Left colon (tissue), 2 donors: ENCODE measurements at regions of chr5 and their contacts with region 1.

Region 1: GRCh38 chr5:6745706-6746222 is 32.5 kb downstream of the TENT4A start:
- DNase-seq: no peak
- ATAC-seq: peak; percentile 93

Region 2: DNA sequence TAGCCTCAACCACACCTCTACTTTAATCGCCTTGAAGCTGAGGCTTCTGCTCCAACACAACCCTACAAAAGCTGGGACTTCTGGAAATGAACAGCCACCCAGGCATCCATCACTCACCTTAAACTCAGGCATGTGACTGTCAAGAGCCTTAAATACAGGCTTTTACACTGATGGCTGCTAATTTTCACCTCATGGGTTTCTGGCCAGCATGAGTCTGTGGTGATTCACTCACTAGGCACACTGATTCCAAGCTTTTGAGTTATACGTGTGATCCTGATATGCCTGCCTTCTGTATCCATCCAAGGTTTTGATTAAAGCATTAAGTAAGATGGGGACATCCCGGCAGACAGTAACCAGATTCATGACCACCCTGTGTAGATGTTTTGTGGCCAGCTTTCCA is 121.8 kb before region 1 on chr5:
- intact Hi-C with region 1: loop called in 1 of 2 experiments (anchors 10 kb)
- DNase-seq: no peak
- ATAC-seq: no peak